Mucosa of descending colon (tissue), 3 donors: ENCODE measurements at regions of chr15 and their contacts with region 1.

Region 1: DNA sequence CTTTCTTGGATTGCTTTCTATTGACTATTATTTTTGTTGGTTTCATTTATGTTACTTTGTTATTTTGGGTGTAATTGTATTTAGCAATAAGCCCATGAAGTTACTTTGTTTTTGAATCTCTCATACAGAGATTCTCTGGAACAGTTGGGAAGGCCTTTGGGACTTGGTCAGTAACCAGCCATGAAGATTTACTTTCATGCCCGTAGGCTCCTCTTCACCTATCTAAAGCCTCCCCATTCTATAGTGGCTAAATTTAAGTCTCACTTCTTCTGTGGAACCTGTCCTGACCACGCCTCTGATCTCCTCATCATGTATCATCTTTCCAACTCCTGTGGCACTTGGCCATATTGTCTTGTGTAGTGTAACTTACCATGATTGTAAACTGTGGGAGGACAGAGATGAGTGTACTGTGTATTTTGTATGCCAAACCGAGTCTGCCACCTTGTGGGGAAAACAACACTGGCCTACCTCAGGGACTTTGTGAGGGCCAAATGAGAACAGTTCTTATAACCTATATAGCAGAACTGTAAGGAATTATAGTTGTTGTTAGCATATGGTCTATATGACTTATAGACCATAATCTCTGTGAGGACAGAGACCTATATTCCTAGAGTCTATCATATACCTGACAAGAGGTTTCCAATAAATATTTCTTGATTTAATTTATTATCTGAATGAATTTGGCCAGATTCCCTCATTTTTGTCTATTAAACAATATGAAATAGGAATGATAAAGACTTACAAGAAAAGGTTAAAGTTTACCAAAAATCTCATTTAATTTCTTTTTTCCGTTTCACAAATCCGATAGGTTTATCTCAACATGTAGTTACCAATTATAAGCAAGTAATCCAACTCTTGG is 75.0 kb downstream of the STARD9 start:
- DNase-seq: peak in 2 of 3 donors; percentile 63 to 90
- ATAC-seq: peak; percentile 96
- H3K4me3 ChIP-seq: no peak overlapping the region
- H3K4me1 ChIP-seq: no peaks in the 10 kb centered on the region
- CTCF ChIP-seq: peak; percentile 57

Region 2: DNA sequence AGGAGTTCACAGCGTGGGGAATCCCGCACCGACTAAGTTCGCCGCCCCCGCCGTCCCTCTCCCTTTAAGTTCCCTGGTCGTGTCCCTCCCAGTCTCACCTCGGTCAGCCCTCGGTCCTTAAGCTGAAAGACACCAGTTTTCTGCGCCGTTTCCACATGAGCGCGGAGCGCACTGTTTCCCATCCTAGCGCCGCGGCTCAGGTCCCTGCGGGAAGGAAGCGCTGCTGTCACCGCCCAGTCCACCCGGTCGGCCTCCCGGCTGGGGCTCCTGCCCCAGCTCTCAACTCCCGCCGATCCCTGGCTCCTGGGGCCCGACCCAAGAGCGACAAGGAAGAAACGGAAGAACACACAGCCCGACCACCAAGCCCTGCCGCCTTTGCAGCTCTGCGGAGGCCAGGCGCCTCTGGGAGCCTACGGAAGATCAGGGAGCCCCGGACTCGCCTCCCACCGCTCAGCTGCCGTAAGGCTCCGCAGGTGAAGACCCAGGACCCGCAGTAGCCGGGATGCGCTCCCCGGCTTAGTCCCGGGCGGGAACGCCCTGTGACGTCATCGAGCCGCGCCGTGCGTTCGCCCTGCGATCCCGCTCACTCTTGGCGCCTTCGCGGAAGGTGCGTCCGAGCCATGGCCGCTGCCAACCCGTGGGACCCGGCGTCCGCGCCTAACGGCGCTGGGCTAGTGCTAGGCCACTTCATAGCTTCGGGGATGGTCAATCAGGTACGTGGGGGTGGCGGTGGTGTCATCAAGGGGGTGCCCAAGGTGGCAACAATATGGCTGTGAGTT is 102.0 kb before region 1 on chr15 and contains the starts of genes HAUS2 and LRRC57:
- intact Hi-C with region 1: loop called in 1 of 2 experiments (anchors 10 kb)
- DNase-seq: peak; percentile 93 to 95 (median 94)
- ATAC-seq: peak; percentile 98
- H3K4me3 ChIP-seq: peak within 1 kb of the TSS; percentile 90
- H3K4me1 ChIP-seq: peaks cover 22% of the 10 kb centered on the region
- CTCF ChIP-seq: no peak
- total RNA-seq, gene HAUS2: 11.7 to 16.5 (median 13.4) TPM
- total RNA-seq, gene LRRC57: 24.1 to 30.9 (median 26.6) TPM